Activated CD4-positive, alpha-beta T cell treated with anti-CD3 and anti-CD28 coated beads, Interleukin-2, amount 10 ng/mL, durations not matched to agents 24 days and 14 days (primary cell): ENCODE measurements at regions of chr7 and their contacts with region 1.

Region 1: DNA sequence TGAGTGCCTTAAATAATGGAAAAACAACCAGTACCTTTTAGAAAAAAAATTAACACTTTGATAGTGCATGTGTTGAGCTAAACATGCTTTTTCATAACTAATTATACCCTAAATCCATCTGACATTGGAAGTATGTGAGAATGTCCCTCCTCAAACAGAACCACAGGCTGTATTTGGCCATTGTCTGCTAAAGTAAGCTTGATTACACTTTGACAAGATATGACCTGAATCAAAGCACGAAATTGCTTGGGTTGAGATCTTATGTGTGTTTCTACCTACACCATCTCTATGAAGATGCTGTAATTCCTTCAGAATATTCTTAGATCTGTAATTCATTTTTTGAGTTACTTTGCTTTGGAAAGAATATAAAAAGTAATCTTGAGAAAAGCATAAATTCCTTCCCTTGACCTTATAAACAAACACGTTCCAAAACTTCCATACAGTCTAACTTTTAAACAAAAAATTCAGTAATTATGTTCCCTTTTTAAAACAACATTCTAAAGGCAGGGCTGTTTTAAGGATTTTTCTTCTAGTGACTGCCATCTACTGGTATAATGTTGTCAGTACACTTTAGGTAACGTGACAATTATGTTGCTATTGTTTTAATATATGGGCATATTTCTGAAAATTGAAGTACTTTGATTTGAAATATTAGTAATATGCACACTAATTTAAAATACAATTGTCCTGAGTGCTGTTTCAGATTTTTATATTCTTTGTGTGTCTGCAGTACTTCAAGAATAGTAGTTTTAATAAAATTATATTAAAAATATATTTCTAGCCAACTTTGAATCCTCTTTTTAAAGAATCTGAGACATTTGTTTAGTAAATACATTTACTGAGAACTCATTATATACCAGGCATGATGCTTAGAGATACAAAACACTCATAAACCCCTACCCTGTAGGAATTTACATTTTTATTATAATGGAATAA is 20.9 kb downstream of the CD36 start:
- DNase-seq: no peak
- H3K4me3 Mint-ChIP-seq: no peak overlapping the region
- H3K27ac Mint-ChIP-seq: no peak overlapping the region
- H3K4me1 Mint-ChIP-seq: no peaks in the 10 kb centered on the region
- H3K27me3 Mint-ChIP-seq: no peaks in the 10 kb centered on the region

Region 2: GRCh38 chr7:80053124-80053523 is 606.3 kb before region 1 on chr7:
- intact Hi-C with region 1: loop called (anchors 10 kb)
- DNase-seq: no peak
- H3K4me3 Mint-ChIP-seq: no peak overlapping the region
- H3K27ac Mint-ChIP-seq: no peak overlapping the region
- H3K4me1 Mint-ChIP-seq: no peaks in the 10 kb centered on the region
- H3K27me3 Mint-ChIP-seq: no peaks in the 10 kb centered on the region

Region 3: GRCh38 chr7:80722616-80723141 is 63.3 kb after region 1 on chr7:
- intact Hi-C with region 1: no loop called
- DNase-seq: no peak
- H3K4me3 Mint-ChIP-seq: no peak overlapping the region
- H3K27ac Mint-ChIP-seq: no peak overlapping the region
- H3K4me1 Mint-ChIP-seq: no peaks in the 10 kb centered on the region
- H3K27me3 Mint-ChIP-seq: no peaks in the 10 kb centered on the region